ENCODE measurements at regions of chr14 and their contacts with region 1.

Region 1: DNA sequence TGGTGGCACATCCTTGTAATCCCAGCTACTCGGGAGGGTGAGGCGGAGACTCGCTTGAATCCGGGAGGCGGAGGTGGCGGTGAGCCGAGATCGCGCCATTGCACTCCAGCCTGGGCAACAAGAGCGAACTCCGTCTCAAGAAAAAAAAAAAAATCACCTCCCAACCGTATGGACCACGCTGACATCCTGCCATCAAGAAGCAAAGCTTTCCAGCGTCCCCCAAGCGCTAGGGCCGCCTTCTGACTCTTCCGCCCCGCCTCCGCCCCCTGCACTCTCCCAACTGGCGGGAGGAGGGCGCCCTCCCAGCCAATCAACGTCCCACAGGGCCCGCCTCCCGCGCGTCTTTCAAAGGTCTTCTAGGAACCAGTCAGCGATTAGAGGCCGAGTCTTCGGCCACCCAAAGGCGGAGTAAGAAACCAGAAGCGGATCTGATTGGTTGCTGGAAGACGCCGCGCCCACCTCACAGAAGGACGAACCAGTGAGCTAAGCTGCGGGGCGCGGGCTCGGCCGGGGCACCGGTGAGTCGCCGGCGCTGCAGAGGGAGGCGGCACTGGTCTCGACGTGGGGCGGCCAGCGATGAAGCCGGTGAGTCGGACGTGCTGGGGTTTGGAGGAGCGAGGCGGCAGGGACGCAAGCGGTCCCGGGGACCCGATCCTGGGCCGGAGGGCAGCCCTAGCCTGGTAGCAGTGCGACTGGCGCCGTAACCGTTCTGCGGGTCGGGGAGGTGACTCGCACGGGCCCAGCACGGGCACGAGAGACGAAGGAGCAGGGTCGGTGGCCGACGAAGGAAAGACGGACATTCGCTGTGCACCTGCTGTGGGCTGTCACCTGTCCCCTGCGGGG is at the start of gene CDKN3:
- DNase-seq: peak; percentile 98
- H3K4me3 Mint-ChIP-seq: peak within 1 kb of the TSS; percentile 87
- H3K27ac Mint-ChIP-seq: peak within 1 kb of the TSS; percentile 81
- H3K4me1 Mint-ChIP-seq: peaks cover 26% of the 10 kb centered on the region
- H3K27me3 Mint-ChIP-seq: no peaks in the 10 kb centered on the region
- total RNA-seq, gene CDKN3: 53.4 and 57.5 TPM in 2 replicates

Region 2: DNA sequence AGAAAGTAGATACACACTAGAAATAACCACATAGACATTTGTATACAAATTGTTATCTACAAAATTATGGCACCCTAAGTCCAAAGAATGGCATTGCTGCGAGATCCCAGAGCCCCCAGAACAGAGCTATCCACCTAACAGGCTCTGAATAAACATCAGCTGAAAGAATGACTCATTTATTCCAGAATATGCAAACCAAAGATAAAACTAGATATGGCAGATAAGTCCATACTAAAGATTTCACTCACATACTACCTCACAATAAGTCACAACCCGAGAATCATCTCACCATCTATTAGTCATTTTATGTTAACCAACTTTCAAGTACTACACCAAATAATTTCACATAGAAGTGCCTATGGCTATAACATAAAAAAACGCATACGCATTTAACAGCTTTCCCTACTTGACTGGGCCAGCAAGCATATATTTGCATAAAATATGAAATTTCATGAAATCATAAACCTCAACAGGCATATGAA is 38.8 kb after region 1 on chr14:
- intact Hi-C with region 1: loop called (anchors 1 kb)
- DNase-seq: no peak
- H3K4me3 Mint-ChIP-seq: peak overlapping the region; percentile 70
- H3K27ac Mint-ChIP-seq: peak overlapping the region; percentile 95
- H3K4me1 Mint-ChIP-seq: peaks cover 71% of the 10 kb centered on the region
- H3K27me3 Mint-ChIP-seq: no peaks in the 10 kb centered on the region

Region 3: GRCh38 chr14:54509546-54510501 is 113.1 kb after region 1 on chr14 and contains the start of gene CGRRF1:
- intact Hi-C with region 1: loop called (anchors 1 kb)
- DNase-seq: peak; percentile 94
- H3K4me3 Mint-ChIP-seq: peak within 1 kb of the TSS; percentile 88
- H3K27ac Mint-ChIP-seq: peak within 1 kb of the TSS; percentile 67
- H3K4me1 Mint-ChIP-seq: peaks cover 25% of the 10 kb centered on the region
- H3K27me3 Mint-ChIP-seq: peaks cover 6% of the 10 kb centered on the region
- total RNA-seq, gene CGRRF1: 6.2 and 9.1 TPM in 2 replicates

Measured in activated T-helper 2 cell treated with anti-CD3 and anti-CD28 coated beads, Interferon-gamma antibody, Interleukin-2, Interleukin-4, amounts not matched to agents 10 μg/mL and 5 μg/mL and 100 μg/mL, durations not matched to agents 14 hours and 24 hours and 36 hours (primary cell).